ENCODE measurements at regions of chr4 and their contacts with region 1.

Region 1: GRCh38 chr4:184343502-184344177 is 126.0 kb upstream of the ENPP6 start:
- DNase-seq: peak; percentile 64
- H3K4me3 ChIP-seq: peak overlapping the region; percentile 61
- H3K27ac ChIP-seq: peak overlapping the region; percentile 26
- H3K4me1 ChIP-seq: peaks cover 66% of the 10 kb centered on the region
- CTCF ChIP-seq: no peak

Region 2: DNA sequence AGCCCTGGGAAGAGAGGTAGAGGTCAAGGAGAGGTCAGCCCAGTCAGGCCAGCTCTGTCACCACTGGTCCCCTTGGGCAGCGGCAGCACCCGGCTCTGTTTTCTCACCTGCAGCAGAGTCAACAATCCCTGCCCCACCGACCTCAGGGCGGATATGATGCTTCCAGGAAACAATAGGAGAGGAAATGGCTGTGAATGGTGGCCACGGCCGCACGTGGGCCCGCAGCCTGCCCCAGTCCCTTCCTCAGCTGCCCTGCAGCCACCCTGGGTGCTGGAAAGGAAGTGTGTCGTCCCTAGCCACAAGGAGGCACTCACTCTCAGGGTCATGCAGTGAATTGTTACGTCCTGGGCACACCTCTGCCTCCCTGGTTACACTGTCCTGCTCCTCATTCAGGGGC is 33.5 kb before region 1 on chr4:
- CTCF ChIA-PET with region 1: interaction called, 3 read pairs
- POLR2A ChIA-PET with region 1: interaction called, 7 read pairs
- intact Hi-C with region 1: loop called (anchors 1 kb)
- DNase-seq: peak; percentile 73
- H3K4me3 ChIP-seq: no peak overlapping the region
- H3K27ac ChIP-seq: no peak overlapping the region
- H3K4me1 ChIP-seq: peaks cover 56% of the 10 kb centered on the region
- CTCF ChIP-seq: peak; percentile 76

Region 3: DNA sequence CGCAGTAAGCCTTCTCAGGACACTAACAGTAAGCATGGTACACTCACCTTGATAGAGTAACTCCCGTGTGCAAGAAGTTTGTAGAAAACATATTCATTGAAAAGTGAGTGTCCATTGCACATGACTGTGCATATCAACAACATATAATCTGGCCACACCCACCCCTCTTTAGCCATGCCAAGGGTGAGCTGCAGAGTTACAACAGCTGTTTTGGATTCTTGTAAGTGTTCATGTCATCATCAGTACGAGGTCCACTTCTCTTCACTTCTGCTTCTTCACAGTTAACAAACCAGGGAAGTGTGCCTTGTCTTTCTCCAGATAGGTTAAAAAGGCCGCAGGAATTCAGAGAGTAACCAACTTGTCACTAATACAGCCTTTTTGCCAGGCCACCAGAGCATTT is 14.1 kb after region 1 on chr4:
- CTCF ChIA-PET with region 1: interaction called, 3 read pairs
- POLR2A ChIA-PET with region 1: interaction called, 55 read pairs
- intact Hi-C with region 1: no loop called
- DNase-seq: no peak
- H3K4me3 ChIP-seq: no peak overlapping the region
- H3K27ac ChIP-seq: no peak overlapping the region
- H3K4me1 ChIP-seq: peaks cover 42% of the 10 kb centered on the region
- CTCF ChIP-seq: no peak

Region 4: GRCh38 chr4:184364100-184364921 is 20.7 kb after region 1 on chr4:
- CTCF ChIA-PET with region 1: interaction called, 3 read pairs
- POLR2A ChIA-PET with region 1: interaction called, 55 read pairs
- intact Hi-C with region 1: no loop called
- DNase-seq: peak; percentile 82
- H3K4me3 ChIP-seq: no peak overlapping the region
- H3K27ac ChIP-seq: peak overlapping the region; percentile 18
- H3K4me1 ChIP-seq: peaks cover 37% of the 10 kb centered on the region
- CTCF ChIP-seq: no peak

Measured in OCI-LY7 (cell line).